MCF 10A (cell line): ENCODE measurements at regions of chr20 and their contacts with region 1.

Region 1: DNA sequence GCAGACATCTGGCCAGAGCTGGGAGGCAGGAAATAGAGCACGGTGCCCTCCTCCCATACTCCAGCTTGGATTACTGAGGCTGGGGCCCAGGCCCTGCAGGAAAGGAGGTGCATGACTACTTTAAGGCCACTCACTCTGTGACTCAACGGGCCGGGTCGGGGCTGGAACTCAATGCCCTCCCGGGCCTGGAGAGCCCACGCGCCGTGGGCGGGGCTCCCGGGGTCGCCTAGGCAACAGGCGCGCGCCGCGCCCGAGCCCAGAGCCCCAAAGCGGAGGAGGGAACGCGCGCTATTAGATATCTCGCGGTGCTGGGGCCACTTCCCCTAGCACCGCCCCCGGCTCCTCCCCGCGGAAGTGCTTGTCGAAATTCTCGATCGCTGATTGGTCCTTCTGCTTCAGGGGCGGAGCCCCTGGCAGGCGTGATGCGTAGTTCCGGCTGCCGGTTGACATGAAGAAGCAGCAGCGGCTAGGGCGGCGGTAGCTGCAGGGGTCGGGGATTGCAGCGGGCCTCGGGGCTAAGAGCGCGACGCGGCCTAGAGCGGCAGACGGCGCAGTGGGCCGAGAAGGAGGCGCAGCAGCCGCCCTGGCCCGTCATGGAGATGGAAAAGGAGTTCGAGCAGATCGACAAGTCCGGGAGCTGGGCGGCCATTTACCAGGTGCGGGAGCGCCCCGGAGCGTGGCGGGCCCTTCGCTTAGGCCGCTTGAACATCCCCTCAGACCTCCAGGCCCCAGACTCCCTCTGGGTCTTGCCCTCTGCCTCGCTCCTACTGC is at the start of gene PTPN1:
- DNase-seq: peak; percentile 99
- H3K4me3 Mint-ChIP-seq: peak within 1 kb of the TSS; percentile 91
- H3K27ac Mint-ChIP-seq: peak within 1 kb of the TSS; percentile 93
- H3K4me1 Mint-ChIP-seq: peaks cover 31% of the 10 kb centered on the region
- H3K27me3 Mint-ChIP-seq: no peaks in the 10 kb centered on the region
- CTCF ChIP-seq: no peak
- total RNA-seq, gene PTPN1: 56.4 and 63.0 TPM in 2 replicates

Region 2: DNA sequence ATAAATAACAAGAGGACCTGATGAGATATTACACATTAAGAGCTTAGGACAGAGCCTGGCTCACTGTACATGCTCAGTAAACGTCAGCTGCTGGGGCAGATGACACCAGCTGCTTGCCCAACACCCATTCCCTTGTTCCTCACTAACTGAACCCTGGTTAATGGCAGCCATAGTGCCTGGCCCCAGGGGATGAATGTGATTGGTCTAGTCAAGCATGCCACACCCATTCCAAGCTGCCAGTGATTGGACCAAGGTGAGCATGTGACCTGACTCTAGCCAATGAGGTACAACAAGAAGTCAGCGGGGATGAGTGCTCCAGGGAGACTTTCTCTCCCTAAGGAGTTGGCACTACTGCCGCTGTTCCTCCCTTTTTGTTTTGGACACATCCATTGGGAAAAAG is 85.0 kb before region 1 on chr20:
- CTCF ChIA-PET with region 1: interaction called, 3 read pairs
- POLR2A ChIA-PET with region 1: interaction called, 41 read pairs
- intact Hi-C with region 1: no loop called
- DNase-seq: no peak
- H3K4me3 Mint-ChIP-seq: no peak overlapping the region
- H3K27ac Mint-ChIP-seq: peak overlapping the region; percentile 92
- H3K4me1 Mint-ChIP-seq: peaks cover 48% of the 10 kb centered on the region
- H3K27me3 Mint-ChIP-seq: no peaks in the 10 kb centered on the region
- CTCF ChIP-seq: no peak

Region 3: DNA sequence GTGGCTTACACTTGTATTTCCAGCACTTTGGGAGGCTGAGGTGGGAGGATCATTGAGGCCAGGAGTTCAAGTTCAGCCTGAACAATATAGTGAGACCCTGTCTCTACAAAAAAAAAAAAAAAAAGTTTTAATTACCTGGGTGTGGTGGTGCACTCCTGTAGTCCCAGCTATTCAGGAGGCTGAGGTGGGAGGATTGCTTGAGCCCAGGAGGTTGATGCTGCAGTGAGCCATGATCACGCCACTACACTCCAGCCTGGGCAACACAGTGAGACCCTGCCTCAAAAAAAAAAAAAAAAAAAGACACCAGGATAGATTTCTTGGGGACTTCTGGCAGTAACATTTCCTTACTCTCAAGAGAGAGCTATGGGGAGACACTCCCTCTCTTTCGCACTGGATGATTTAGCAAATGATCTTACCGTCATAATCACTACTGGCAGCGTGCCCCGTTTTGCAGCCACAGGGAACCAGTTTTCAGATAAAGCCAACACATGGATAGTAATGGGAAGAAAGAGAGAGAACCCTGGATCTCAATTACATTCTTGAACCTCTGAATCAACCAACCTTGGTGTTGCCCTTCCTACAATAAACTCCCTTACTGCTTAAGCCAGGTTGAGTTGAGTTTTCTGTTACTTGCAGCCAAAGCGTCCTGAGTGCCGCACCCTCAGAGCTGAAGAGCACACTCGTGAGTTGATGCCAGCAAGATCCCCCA is 18.0 kb before region 1 on chr20:
- CTCF ChIA-PET with region 1: interaction called, 25 read pairs
- POLR2A ChIA-PET with region 1: interaction called, 480 read pairs
- intact Hi-C with region 1: no loop called
- DNase-seq: peak; percentile 92
- H3K4me3 Mint-ChIP-seq: peak overlapping the region; percentile 60
- H3K27ac Mint-ChIP-seq: peak overlapping the region; percentile 92
- H3K4me1 Mint-ChIP-seq: peaks cover 39% of the 10 kb centered on the region
- H3K27me3 Mint-ChIP-seq: no peaks in the 10 kb centered on the region
- CTCF ChIP-seq: no peak

Region 4: DNA sequence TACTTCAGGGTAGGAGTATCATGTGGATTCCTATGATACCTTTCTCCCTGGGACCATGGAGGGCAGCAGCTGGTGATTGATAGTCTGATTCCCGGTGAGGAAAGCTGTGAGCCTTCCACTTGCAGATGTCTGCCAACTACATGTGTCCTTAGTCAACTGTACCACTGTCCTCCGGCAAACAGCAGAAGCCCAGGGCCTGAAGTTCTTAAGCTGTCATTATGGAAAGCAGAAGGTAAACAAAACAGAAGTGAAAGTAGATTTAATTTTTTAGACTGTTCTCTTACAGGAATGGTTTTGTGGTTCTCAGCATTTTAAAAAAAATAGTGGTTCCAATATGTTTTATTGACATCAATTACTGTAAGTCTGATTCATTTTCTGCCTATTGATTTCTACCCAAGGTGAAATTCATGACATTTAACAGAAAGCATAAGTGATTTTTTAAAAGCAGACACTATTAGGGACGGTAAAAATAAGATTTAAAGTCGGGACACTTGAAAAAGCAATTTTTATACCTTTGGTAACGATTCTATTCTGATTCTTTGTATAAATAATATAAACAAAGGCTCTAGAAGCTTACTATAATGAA is 36.7 kb after region 1 on chr20:
- CTCF ChIA-PET with region 1: interaction called, 6 read pairs
- POLR2A ChIA-PET with region 1: interaction called, 109 read pairs
- intact Hi-C with region 1: no loop called
- DNase-seq: no peak
- H3K4me3 Mint-ChIP-seq: no peak overlapping the region
- H3K27ac Mint-ChIP-seq: peak overlapping the region; percentile 41
- H3K4me1 Mint-ChIP-seq: peaks cover 31% of the 10 kb centered on the region
- H3K27me3 Mint-ChIP-seq: no peaks in the 10 kb centered on the region
- CTCF ChIP-seq: no peak

Region 5: GRCh38 chr20:50569864-50570836 is 60.0 kb after region 1 on chr20:
- CTCF ChIA-PET with region 1: interaction called, 35 read pairs
- POLR2A ChIA-PET with region 1: interaction called, 146 read pairs
- intact Hi-C with region 1: loop called (anchors 2 kb)
- DNase-seq: peak; percentile 42
- H3K4me3 Mint-ChIP-seq: no peak overlapping the region
- H3K27ac Mint-ChIP-seq: peak overlapping the region; percentile 74
- H3K4me1 Mint-ChIP-seq: peaks cover 39% of the 10 kb centered on the region
- H3K27me3 Mint-ChIP-seq: no peaks in the 10 kb centered on the region
- CTCF ChIP-seq: peak; percentile 43

Region 6: GRCh38 chr20:50635667-50636503 is 125.8 kb after region 1 on chr20:
- CTCF ChIA-PET with region 1: interaction called, 11 read pairs
- POLR2A ChIA-PET with region 1: no interaction called
- intact Hi-C with region 1: no loop called
- DNase-seq: peak; percentile 66
- H3K4me3 Mint-ChIP-seq: no peak overlapping the region
- H3K27ac Mint-ChIP-seq: no peak overlapping the region
- H3K4me1 Mint-ChIP-seq: peaks cover 6% of the 10 kb centered on the region
- H3K27me3 Mint-ChIP-seq: no peaks in the 10 kb centered on the region
- CTCF ChIP-seq: peak; percentile 91